ENCODE measurements at regions of chr11 and their contacts with region 1.

Region 1: GRCh38 chr11:76444384-76445123 is at the start of gene EMSY:
- DNase-seq: peak; percentile 97
- H3K4me3 ChIP-seq: peak within 1 kb of the TSS; percentile 95
- H3K27ac ChIP-seq: peak within 1 kb of the TSS; percentile 83
- H3K4me1 ChIP-seq: peaks cover 7% of the 10 kb centered on the region
- H3K27me3 ChIP-seq: no peaks in the 10 kb centered on the region
- CTCF ChIP-seq: no peak
- total RNA-seq, gene EMSY: 21.2 to 22.8 TPM

Region 2: DNA sequence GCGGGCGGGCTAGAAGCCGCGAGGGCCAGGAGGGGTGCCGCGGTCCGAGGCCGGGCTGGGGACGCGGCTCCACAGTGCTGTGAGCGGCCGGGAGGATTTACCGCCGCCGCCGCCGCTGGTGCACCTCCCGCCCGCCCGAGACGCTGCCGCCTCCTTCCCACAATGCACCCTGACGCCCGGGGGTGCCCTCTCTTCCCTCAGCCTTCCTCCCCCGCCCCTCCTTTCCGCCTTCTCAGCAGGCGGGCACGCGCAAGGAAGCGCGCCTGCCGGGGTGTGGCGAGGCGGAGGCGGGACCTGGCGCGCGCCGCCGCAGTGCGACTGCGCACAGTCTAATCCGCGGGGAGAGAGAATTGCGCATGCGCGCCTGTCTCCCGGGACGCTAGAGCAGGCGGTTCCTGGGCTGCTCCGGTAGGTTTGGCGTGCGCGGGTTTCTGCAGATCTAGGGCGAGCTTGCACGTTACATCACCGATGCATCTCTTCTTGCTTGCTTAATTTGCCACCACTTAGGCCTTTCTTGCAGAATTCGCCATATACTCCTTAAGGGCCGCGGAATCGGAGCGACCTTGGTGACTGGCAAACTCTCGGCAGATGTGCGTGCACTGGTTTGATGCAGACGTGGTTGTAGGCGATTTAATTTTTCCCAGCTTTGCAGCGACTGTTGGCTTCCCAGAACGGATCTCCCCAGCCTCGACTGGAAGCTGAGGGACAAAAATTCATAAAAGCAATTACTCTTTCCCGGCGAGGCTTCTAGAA is 63.4 kb before region 1 on chr11 and contains the starts of genes GVQW3 and THAP12:
- intact Hi-C with region 1: loop called (anchors 5 kb)
- DNase-seq: peak; percentile 97
- H3K4me3 ChIP-seq: peak within 1 kb of the TSS; percentile 96
- H3K27ac ChIP-seq: peak within 1 kb of the TSS; percentile 88
- H3K4me1 ChIP-seq: peaks cover 13% of the 10 kb centered on the region
- H3K27me3 ChIP-seq: no peaks in the 10 kb centered on the region
- CTCF ChIP-seq: no peak
- total RNA-seq, gene GVQW3: 2.2 to 2.8 TPM
- total RNA-seq, gene THAP12: 34.4 to 41.6 TPM